CD4-positive, alpha-beta T cell (primary cell): ENCODE measurements at regions of chr1 and their contacts with region 1.

Region 1: DNA sequence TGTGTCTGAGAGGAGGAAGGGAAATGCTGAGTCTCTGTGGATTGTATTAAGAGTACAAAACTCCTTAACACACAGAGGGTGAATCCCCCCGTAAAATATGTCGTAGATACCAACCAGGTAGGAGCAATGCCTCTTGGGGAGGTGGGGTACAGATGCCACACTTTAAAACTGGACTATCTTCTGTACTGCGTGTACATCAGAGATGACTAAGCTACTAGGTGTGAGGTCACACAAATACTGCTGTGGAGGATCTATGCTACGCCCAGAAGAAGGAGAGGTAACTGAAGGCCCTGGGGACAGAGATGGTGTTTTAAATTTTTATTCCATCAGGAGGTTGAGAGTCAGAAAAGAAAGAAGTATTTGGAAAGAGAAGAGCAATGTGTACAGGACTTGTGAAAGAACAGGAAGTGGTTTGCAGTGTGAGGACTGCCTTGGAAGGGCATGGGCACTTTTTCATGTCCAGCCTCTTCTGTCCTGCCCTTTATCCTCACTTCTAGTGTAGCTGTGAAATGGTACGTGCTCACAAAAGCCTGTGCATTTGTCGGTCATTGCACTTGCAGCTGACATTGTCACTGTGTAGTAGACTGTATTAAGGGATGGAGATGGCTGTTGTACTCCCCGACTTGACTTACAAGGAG is 287.8 kb upstream of the CHRM3 start:
- DNase-seq: no peak
- ATAC-seq: no peak
- H3K4me3 ChIP-seq: no peak overlapping the region
- H3K4me3 Mint-ChIP-seq: no peak overlapping the region
- H3K27ac ChIP-seq: no peak overlapping the region
- H3K27ac Mint-ChIP-seq: no peak overlapping the region
- H3K4me1 ChIP-seq: no peaks in the 10 kb centered on the region
- H3K4me1 Mint-ChIP-seq: no peaks in the 10 kb centered on the region
- H3K27me3 ChIP-seq: no peaks in the 10 kb centered on the region
- H3K27me3 Mint-ChIP-seq: no peaks in the 10 kb centered on the region
- CTCF ChIP-seq: no peak

Region 2: GRCh38 chr1:239025223-239025622 is 73.3 kb before region 1 on chr1:
- CTCF ChIA-PET with region 1: no interaction called
- POLR2A ChIA-PET with region 1: no interaction called
- intact Hi-C with region 1: no loop called
- DNase-seq: peak in 2 of 14 experiments; percentile 2 to 6
- ATAC-seq: no peak
- H3K4me3 ChIP-seq: no peak overlapping the region
- H3K4me3 Mint-ChIP-seq: no peak overlapping the region
- H3K27ac ChIP-seq: no peak overlapping the region
- H3K27ac Mint-ChIP-seq: no peak overlapping the region
- H3K4me1 ChIP-seq: no peaks in the 10 kb centered on the region
- H3K4me1 Mint-ChIP-seq: no peaks in the 10 kb centered on the region
- H3K27me3 ChIP-seq: no peaks in the 10 kb centered on the region
- H3K27me3 Mint-ChIP-seq: no peaks in the 10 kb centered on the region
- CTCF ChIP-seq: no peak

Region 3: DNA sequence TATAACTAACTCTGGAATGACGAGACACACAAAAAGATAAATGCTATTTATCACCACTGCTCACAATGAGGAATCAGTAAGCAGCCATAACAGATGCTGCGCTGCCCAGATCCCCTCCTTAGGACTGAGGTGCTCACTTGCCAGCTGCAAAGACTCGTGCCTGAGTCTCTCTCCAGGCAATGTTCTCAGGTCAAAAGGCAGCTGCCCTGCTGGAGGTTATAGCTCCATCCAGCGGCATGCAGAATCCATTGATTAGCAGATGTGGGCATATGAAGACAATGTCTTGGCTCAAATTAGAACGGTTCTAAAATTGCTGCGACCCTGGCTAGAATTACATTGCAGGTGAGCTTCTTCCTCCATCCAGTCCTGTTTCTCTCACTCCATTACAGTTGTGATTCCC is 40.3 kb before region 1 on chr1:
- CTCF ChIA-PET with region 1: no interaction called
- POLR2A ChIA-PET with region 1: no interaction called
- intact Hi-C with region 1: loop called in 1 of 2 experiments (anchors 1 kb)
- DNase-seq: no peak
- ATAC-seq: no peak
- H3K4me3 ChIP-seq: no peak overlapping the region
- H3K4me3 Mint-ChIP-seq: no peak overlapping the region
- H3K27ac ChIP-seq: no peak overlapping the region
- H3K27ac Mint-ChIP-seq: no peak overlapping the region
- H3K4me1 ChIP-seq: no peaks in the 10 kb centered on the region
- H3K4me1 Mint-ChIP-seq: no peaks in the 10 kb centered on the region
- H3K27me3 ChIP-seq: no peaks in the 10 kb centered on the region
- H3K27me3 Mint-ChIP-seq: no peaks in the 10 kb centered on the region
- CTCF ChIP-seq: no peak

Region 4: GRCh38 chr1:239112101-239112935 is 13.8 kb after region 1 on chr1:
- CTCF ChIA-PET with region 1: no interaction called
- POLR2A ChIA-PET with region 1: no interaction called
- intact Hi-C with region 1: no loop called
- DNase-seq: no peak
- ATAC-seq: no peak
- H3K4me3 ChIP-seq: no peak overlapping the region
- H3K4me3 Mint-ChIP-seq: no peak overlapping the region
- H3K27ac ChIP-seq: no peak overlapping the region
- H3K27ac Mint-ChIP-seq: no peak overlapping the region
- H3K4me1 ChIP-seq: no peaks in the 10 kb centered on the region
- H3K4me1 Mint-ChIP-seq: no peaks in the 10 kb centered on the region
- H3K27me3 ChIP-seq: no peaks in the 10 kb centered on the region
- H3K27me3 Mint-ChIP-seq: no peaks in the 10 kb centered on the region
- CTCF ChIP-seq: no peak